ENCODE measurements at regions of chr10 and their contacts with region 1.

Region 1: DNA sequence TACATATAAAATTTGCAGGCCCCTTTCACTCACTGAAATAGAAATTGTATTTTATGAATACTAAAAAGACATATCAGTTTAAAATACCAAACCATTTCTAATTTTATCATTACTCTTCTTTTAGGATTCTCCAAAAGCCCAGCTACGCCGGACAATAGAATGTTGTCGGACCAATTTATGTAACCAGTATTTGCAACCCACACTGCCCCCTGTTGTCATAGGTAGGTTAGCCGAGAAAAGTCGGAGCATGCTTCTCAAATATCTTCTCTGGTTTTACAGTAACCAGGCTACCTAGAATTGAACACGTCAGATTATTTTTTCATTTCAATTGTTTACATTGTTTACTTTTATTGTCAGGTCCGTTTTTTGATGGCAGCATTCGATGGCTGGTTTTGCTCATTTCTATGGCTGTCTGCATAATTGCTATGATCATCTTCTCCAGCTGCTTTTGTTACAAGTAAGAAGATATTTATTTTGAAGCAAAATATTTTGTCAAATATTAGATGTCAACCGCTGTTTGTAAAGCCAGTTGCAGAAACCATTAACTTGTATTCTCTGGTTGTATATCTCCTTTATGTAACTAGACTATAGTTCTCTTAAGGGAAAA is 57.6 kb downstream of the MMRN2 start:
- DNase-seq: peak; percentile 60
- ATAC-seq: peak; percentile 60 to 70

Region 2: DNA sequence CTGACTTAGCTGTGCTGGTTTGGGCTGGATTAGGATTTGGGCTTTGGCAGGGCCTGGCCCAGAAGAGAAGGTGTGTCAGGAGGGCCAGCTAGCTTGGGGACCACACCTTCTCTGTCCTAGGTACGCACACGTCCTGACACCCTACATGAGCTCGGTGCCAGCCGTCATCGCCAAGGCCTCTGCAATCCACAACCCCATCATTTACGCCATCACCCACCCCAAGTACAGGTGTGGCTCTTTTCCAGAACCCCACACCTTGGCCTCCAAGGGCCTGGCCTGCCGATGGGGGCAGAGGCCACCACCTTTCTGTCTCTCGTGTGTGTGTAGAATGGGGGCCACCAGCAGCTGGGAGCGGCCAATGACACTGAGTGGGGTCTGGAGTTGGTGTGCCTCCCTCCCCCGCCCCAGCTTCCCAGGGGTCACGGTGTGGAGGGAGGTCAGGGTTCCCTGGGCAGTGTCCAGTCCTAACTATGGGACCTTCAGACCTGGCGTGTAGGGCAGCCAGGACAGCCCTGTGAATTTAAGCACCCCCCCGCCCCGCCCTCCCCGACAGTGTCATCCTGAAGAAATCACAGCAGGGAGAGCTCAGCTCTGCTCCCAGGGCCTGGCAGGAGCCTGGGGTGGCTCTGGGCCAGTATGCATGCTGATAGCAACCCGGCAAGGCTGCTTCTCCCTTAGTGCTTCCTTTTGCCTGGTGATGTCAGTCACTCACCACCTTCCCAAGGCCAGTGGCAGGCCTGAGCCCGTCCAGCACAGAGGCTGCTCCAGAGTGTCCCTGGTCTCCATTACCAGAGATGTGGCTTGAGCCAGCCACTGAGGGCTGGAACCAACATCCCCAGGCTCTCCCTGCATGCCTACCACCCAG is 238.4 kb before region 1 on chr10:
- intact Hi-C with region 1: no loop called
- DNase-seq: peak; percentile 83
- ATAC-seq: peak; percentile 43 to 60

Region 3: DNA sequence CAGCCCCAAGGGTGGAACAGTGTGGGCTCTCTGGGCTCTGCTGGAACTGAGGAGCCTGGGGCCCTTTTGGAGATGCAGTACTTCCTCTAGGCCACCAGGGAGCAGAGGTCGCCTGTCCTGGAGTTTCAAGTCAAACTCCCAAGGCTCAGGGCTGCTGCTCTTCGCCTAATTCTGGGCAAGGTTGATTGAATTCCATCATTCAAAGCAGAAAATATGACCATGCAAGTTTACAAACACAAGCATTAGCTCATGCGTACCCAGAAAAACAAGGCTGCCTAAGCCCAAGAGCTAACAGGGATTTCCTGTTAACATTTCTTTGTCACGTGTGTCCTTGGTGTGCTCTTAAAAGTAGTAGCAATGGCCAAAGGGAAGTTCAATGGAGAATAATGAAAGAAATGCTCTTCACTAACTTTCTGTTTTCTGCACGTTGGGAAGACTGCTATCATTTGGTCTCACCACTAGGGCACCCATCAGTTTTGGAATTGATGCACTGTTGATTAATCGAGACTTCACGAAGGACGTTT is 211.3 kb before region 1 on chr10:
- intact Hi-C with region 1: loop called in 1 of 2 experiments (anchors 5 kb)
- DNase-seq: peak; percentile 67
- ATAC-seq: peak; percentile 7 to 8

Region 4: DNA sequence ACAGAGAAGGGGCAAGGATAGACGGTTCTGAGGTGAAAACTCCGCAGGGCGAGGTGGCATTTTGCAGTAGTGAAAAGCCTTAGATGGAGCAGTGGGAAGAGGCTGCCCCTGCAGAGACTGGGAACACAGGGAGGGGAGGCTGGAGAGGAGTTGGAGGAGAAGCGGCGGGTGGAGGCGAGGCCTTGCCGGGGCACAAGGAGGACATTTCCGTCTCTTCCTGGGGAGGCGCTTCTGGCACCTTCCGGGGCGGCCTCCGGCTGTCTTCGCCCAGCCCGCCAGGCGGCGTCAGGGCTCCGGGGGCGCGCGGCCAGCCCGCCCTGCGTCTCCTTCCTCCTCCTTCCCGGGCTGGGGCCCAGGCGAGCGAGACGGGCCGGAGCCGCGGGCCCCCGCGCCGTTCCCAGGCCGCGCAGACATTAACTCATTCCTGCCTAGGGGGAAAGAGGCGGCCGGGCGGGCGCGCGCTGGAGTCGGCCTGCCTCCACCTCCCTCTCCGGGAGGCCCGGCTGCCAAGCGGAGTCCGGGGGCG is 188.7 kb before region 1 on chr10:
- intact Hi-C with region 1: loop called in 1 of 2 experiments (anchors 5 kb)
- DNase-seq: peak; percentile 91
- ATAC-seq: peak; percentile 84 to 89

Measured in left cardiac atrium (tissue), 4 donors.